ENCODE measurements at regions of chr17 and their contacts with region 1.

Region 1: GRCh38 chr17:38693700-38694329 is 11.3 kb upstream of the MLLT6 start:
- DNase-seq: peak in 1 of 2 donors; percentile 92
- H3K4me3 ChIP-seq: no peak overlapping the region
- H3K27ac ChIP-seq: peak overlapping the region; percentile 73
- H3K4me1 ChIP-seq: peaks cover 14% of the 10 kb centered on the region
- H3K27me3 ChIP-seq: no peaks in the 10 kb centered on the region
- CTCF ChIP-seq: no peak
- POLR2A ChIP-seq: no peak

Region 2: GRCh38 chr17:38729886-38730525 is 36.2 kb after region 1 on chr17 and contains the start of gene CISD3:
- intact Hi-C with region 1: loop called (anchors 5 kb)
- DNase-seq: no peak
- H3K4me3 ChIP-seq: peak within 1 kb of the TSS; percentile 73 to 92
- H3K27ac ChIP-seq: peak within 1 kb of the TSS; percentile 85
- H3K4me1 ChIP-seq: peaks cover 45% of the 10 kb centered on the region
- H3K27me3 ChIP-seq: no peaks in the 10 kb centered on the region
- CTCF ChIP-seq: peak; percentile 68 to 82 (median 71)
- POLR2A ChIP-seq: no peak
- total RNA-seq, gene CISD3: 12.8 TPM

Measured in vagina (tissue), 2 donors.